Panc1 (cell line): ENCODE measurements at regions of chr1 and their contacts with region 1.

Region 1: DNA sequence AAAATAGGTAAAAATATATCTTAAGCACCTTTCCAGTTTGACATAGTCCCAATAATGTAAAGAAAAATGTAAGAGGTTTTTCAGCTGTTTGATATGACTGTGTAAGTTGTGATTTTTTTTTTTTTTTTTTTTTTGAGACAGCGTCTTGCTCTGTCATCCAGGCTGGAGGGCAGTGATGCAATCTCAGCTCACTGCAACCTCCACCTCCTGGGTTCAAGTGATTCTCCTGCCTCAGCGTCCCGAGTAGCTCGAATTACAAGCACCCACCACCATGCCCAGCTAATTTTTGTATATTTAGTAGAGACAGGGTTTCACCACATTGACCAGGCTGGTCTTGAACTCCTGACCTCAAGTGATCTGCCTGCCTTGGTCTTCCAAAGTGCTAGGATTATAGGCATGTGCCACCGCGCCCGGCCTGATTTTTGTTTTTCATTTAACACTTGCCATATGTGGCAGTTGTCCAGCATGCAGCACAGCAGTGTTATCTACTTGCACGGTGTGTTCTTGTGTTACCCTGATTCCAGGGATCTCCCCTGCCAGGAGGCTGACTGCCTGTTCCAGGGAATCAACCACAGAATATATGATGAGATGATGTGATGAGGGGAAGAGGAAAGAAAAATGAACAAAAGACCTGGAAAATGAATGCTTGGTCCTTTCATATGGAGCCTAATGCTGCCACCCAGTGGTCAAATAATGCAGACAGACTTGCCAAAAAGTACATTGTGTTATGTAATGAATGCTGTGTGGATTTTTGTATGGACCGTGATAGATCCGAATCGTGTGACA is 79.0 kb downstream of the RAVER2 start:
- DNase-seq: peak; percentile 81
- ATAC-seq: peak; percentile 91
- H3K4me3 ChIP-seq: no peak overlapping the region
- H3K27ac ChIP-seq: no peak overlapping the region
- H3K4me1 ChIP-seq: no peaks in the 10 kb centered on the region
- H3K27me3 ChIP-seq: no peaks in the 10 kb centered on the region
- CTCF ChIP-seq: peak; percentile 81

Region 2: DNA sequence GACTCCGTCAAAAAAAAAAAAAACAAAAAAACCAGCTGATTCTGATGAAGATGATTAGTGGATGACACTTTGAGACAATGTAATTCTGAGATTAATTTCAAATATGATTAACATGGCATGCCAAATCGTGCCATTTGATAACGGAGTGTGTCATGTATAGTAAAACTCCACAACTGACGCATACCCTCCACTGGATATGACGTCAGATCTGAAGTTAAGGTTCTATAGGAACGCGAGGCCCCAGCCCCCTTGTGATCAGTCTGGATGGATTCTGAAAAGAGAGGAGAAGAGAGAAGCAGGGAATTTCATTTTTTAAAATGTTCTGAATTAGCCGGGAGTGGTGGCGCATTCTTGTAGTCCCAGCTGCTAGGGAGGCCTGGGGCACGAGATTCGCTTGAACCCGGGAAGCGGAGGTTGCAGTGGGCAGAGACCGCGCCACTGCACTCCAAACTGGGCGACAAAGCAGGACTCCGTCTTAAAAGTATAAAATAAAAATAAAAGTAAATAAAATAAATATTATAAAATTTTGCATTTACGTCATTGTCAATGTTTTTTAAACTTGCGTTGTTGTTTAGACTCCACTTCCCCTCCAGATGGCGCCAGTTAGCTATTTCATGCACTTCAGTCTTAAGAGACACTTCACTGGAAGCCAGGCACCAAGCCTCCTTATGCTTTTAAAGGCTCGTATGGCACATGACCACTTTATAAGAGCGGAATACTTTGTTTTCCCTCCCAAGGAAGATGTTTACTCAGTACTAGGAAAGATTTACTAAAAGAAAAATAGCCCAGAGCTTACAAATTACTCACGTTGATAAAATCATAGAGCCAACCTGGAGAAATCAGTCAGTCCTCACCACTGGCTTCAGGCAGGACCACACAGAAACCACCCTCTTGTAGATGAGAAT is 555.0 kb before region 1 on chr1:
- CTCF ChIA-PET with region 1: no interaction called
- POLR2A ChIA-PET with region 1: no interaction called
- in situ Hi-C with region 1: no loop called
- intact Hi-C with region 1: loop called (anchors 1 kb)
- DNase-seq: peak; percentile 61
- ATAC-seq: peak; percentile 97
- H3K4me3 ChIP-seq: peak overlapping the region in 1 of 2 experiments; percentile 28; a peak in 2 of 4 replicates
- H3K27ac ChIP-seq: peak overlapping the region; percentile 69
- H3K4me1 ChIP-seq: peaks cover 13% of the 10 kb centered on the region
- H3K27me3 ChIP-seq: no peaks in the 10 kb centered on the region; the same call in 1 of the 2 replicates
- CTCF ChIP-seq: peak; percentile 80

Region 3: DNA sequence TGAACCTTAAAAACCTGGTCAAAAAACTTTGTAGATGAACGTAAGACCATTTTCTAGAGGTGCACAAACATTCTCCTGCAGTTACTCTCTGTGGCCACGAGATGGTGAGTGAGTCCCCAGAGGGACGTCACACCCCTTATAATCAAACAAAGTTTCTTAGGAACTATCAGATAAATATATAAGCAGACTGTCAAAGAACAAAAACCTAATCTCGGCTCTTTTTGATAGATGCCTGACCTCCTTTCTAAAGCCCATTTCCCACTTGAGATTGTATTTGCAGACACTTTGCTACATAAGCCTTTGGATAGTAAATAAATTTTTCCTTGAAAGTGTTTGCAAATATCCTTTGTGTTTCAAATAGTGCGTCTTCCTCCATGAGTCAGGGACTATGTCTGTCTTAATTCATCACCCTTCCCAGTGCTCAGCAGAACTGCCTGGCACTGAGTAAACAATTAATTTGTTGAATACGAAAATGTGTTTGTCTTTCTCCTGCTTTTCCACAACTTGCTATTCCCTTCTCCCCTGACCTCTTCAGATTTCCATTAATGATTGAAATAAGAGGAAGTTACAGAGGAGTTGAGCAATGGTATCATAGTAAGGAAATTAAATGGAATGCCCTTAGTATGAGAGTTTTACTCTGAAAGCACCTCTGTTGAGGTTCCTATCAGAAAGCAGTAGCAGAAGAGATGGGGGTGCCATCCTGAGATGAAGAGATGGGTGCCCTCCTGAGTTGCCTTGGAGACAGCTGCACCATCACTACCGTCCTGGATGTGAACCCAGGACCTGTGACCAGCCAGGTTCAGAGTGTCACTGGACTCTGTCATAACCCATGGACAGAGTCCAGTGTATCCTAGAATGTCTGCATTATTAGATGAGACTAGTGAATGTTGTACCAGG is 136.8 kb before region 1 on chr1:
- CTCF ChIA-PET with region 1: no interaction called
- POLR2A ChIA-PET with region 1: no interaction called
- in situ Hi-C with region 1: no loop called
- intact Hi-C with region 1: loop called (anchors 2 kb)
- DNase-seq: peak; percentile 30
- ATAC-seq: peak; percentile 81
- H3K4me3 ChIP-seq: no peak overlapping the region
- H3K27ac ChIP-seq: no peak overlapping the region
- H3K4me1 ChIP-seq: no peaks in the 10 kb centered on the region
- H3K27me3 ChIP-seq: no peaks in the 10 kb centered on the region
- CTCF ChIP-seq: peak; percentile 79

Region 4: GRCh38 chr1:64701886-64702285 is 122.0 kb before region 1 on chr1:
- CTCF ChIA-PET with region 1: no interaction called
- POLR2A ChIA-PET with region 1: no interaction called
- in situ Hi-C with region 1: loop called (anchors 25 kb)
- intact Hi-C with region 1: no loop called
- DNase-seq: no peak
- ATAC-seq: no peak
- H3K4me3 ChIP-seq: no peak overlapping the region
- H3K27ac ChIP-seq: no peak overlapping the region
- H3K4me1 ChIP-seq: no peaks in the 10 kb centered on the region
- H3K27me3 ChIP-seq: no peaks in the 10 kb centered on the region
- CTCF ChIP-seq: no peak

Region 5: GRCh38 chr1:64744492-64745180 is 79.2 kb before region 1 on chr1 and contains the start of gene RAVER2:
- CTCF ChIA-PET with region 1: no interaction called
- POLR2A ChIA-PET with region 1: no interaction called
- in situ Hi-C with region 1: no loop called
- intact Hi-C with region 1: loop called (anchors 2 kb)
- DNase-seq: no peak
- ATAC-seq: peak; percentile 88
- H3K4me3 ChIP-seq: peak within 1 kb of the TSS; percentile 65 to 82
- H3K27ac ChIP-seq: peak within 1 kb of the TSS; percentile 80
- H3K4me1 ChIP-seq: peaks cover 23% of the 10 kb centered on the region
- H3K27me3 ChIP-seq: no peaks in the 10 kb centered on the region; the same call in 1 of the 2 replicates
- CTCF ChIP-seq: peak; percentile 91
- total RNA-seq, gene RAVER2: 15.1 TPM

Region 6: DNA sequence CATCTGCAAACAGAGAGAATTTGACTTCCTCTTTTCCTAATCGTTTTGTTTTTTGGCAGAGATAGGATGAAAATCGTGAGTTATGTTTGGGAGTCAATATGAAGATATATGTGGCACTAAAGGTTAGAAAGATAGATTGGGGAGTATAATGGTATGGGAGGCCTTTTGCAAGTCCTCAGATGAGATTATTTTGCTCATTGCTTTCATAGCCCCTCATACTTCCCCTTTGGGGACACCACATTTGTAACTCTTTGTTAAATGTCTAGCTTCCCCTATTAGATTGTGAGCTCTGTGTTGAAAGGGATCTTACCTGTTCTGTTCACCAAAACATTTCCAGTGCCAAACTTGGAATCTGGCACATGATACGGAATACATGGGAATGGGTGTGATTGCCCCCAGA is 48.8 kb before region 1 on chr1:
- CTCF ChIA-PET with region 1: no interaction called
- POLR2A ChIA-PET with region 1: no interaction called
- in situ Hi-C with region 1: no loop called
- intact Hi-C with region 1: no loop called
- DNase-seq: no peak
- ATAC-seq: no peak
- H3K4me3 ChIP-seq: no peak overlapping the region
- H3K27ac ChIP-seq: no peak overlapping the region
- H3K4me1 ChIP-seq: no peaks in the 10 kb centered on the region
- H3K27me3 ChIP-seq: no peaks in the 10 kb centered on the region
- CTCF ChIP-seq: no peak